ENCODE measurements at regions of chr17 and their contacts with region 1.

Region 1: GRCh38 chr17:28041068-28041843 is 1.2 kb upstream of the NLK start:
- DNase-seq: peak; percentile 100
- H3K4me3 ChIP-seq: peak overlapping the region in 1 of 3 experiments; percentile 95
- H3K27ac ChIP-seq: no peak overlapping the region
- H3K4me1 ChIP-seq: peaks cover 31% of the 10 kb centered on the region
- H3K27me3 ChIP-seq: no peaks in the 10 kb centered on the region
- CTCF ChIP-seq: no peak
- POLR2A ChIP-seq: peak; percentile 87

Region 2: DNA sequence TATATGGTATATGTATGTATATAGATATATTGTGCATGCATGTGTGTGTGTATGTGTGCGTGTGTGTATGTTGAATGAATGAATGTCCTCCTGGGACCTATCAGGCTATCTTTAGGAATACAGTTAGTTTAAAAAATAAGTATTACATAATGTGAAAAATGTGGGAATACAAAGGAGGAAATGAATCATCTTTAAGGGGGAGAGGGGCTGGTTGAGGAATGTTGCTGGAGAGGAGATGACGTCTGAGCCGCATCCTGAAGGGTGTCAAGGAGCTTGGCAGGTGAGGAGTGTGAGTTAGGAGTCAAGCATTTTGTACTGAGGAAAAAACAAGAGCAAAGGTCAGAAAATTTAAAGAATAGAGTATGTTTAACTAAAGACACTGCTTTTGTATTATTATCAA is 61.2 kb before region 1 on chr17:
- CTCF ChIA-PET with region 1: interaction called, 3 read pairs
- POLR2A ChIA-PET with region 1: interaction called, 8 read pairs
- dilution Hi-C with region 1: no loop called
- intact Hi-C with region 1: loop called (anchors 1 kb)
- DNase-seq: peak; percentile 99
- H3K4me3 ChIP-seq: no peak overlapping the region
- H3K27ac ChIP-seq: peak overlapping the region; percentile 91
- H3K4me1 ChIP-seq: peaks cover 52% of the 10 kb centered on the region
- H3K27me3 ChIP-seq: no peaks in the 10 kb centered on the region
- CTCF ChIP-seq: no peak
- POLR2A ChIP-seq: peak; percentile 47

Region 3: DNA sequence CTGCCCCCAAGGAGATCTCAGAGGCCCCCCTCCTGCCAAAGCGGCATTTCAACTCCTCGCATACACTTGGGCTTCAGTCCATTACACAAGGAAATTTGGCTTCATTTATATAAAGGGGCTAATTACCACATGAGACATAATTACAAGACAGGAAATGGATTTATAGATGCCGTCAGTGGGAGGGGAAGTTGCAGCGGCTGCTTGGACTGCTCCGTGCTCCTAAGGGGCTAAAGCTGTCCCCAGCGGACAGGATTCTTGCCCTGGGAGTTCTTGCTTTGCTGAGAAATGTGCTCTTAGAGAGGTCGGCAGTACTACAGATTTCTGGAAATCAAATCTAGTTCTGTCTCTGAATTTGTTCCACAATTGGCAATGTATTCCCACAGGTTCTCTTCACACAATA is 56.0 kb before region 1 on chr17:
- CTCF ChIA-PET with region 1: no interaction called
- POLR2A ChIA-PET with region 1: interaction called, 8 read pairs
- dilution Hi-C with region 1: no loop called
- intact Hi-C with region 1: loop called (anchors 1 kb)
- DNase-seq: peak; percentile 72
- H3K4me3 ChIP-seq: no peak overlapping the region
- H3K27ac ChIP-seq: peak overlapping the region; percentile 49
- H3K4me1 ChIP-seq: peaks cover 69% of the 10 kb centered on the region
- H3K27me3 ChIP-seq: no peaks in the 10 kb centered on the region
- CTCF ChIP-seq: no peak
- POLR2A ChIP-seq: no peak

Region 4: GRCh38 chr17:28057731-28058279 is 16.5 kb after region 1 on chr17:
- CTCF ChIA-PET with region 1: interaction called, 12 read pairs
- POLR2A ChIA-PET with region 1: interaction called, 3 read pairs
- dilution Hi-C with region 1: no loop called
- intact Hi-C with region 1: no loop called
- DNase-seq: no peak
- H3K4me3 ChIP-seq: no peak overlapping the region
- H3K27ac ChIP-seq: no peak overlapping the region
- H3K4me1 ChIP-seq: no peaks in the 10 kb centered on the region
- H3K27me3 ChIP-seq: no peaks in the 10 kb centered on the region
- CTCF ChIP-seq: no peak
- POLR2A ChIP-seq: no peak

Region 5: GRCh38 chr17:28174352-28174964 is 133.2 kb after region 1 on chr17:
- CTCF ChIA-PET with region 1: no interaction called
- POLR2A ChIA-PET with region 1: interaction called, 3 read pairs
- dilution Hi-C with region 1: no loop called
- intact Hi-C with region 1: loop called (anchors 1 kb)
- DNase-seq: peak; percentile 29
- H3K4me3 ChIP-seq: no peak overlapping the region
- H3K27ac ChIP-seq: peak overlapping the region; percentile 79
- H3K4me1 ChIP-seq: peaks cover 45% of the 10 kb centered on the region
- H3K27me3 ChIP-seq: no peaks in the 10 kb centered on the region
- CTCF ChIP-seq: no peak
- POLR2A ChIP-seq: no peak

Measured in endothelial cell of umbilical vein (primary cell).